ENCODE measurements at regions of chr15 and their contacts with region 1.

Region 1: DNA sequence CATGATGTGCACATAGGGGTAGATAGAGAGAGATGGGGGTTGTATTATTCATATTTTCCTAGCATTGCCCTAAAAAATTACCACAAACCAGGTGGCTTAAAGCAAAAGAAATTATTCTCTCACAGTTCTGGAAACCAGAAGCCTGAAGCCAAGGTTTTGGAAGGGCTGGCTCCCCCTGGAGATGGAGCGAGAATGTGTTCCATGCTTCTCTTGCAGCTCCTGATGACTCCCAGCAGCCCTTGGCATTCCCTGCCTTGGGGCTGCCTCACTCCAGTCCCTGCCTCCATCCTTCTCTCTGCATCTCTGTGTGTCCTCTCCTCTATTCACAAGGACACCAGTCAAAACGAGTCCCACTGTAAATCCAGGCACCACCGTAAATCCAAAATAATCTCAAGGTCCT is 91.5 kb upstream of the FAM174B start:
- DNase-seq: peak; percentile 28 to 50
- H3K4me3 ChIP-seq: no peak overlapping the region
- H3K4me3 Mint-ChIP-seq: no peak overlapping the region
- H3K27ac Mint-ChIP-seq: peak overlapping the region; percentile 90
- H3K4me1 ChIP-seq: peaks cover 80% of the 10 kb centered on the region
- H3K4me1 Mint-ChIP-seq: peaks cover 24% of the 10 kb centered on the region
- H3K27me3 ChIP-seq: no peaks in the 10 kb centered on the region
- H3K27me3 Mint-ChIP-seq: no peaks in the 10 kb centered on the region
- CTCF ChIP-seq: no peak

Region 2: GRCh38 chr15:92665100-92665555 is 81.9 kb before region 1 on chr15:
- CTCF ChIA-PET with region 1: no interaction called
- POLR2A ChIA-PET with region 1: no interaction called
- intact Hi-C with region 1: loop called (anchors 5 kb)
- DNase-seq: no peak
- H3K4me3 ChIP-seq: no peak overlapping the region
- H3K4me3 Mint-ChIP-seq: peak overlapping the region; percentile 25
- H3K27ac Mint-ChIP-seq: peak overlapping the region; percentile 44
- H3K4me1 ChIP-seq: peaks cover 80% of the 10 kb centered on the region
- H3K4me1 Mint-ChIP-seq: peaks cover 56% of the 10 kb centered on the region
- H3K27me3 ChIP-seq: no peaks in the 10 kb centered on the region
- H3K27me3 Mint-ChIP-seq: no peaks in the 10 kb centered on the region
- CTCF ChIP-seq: no peak

Region 3: DNA sequence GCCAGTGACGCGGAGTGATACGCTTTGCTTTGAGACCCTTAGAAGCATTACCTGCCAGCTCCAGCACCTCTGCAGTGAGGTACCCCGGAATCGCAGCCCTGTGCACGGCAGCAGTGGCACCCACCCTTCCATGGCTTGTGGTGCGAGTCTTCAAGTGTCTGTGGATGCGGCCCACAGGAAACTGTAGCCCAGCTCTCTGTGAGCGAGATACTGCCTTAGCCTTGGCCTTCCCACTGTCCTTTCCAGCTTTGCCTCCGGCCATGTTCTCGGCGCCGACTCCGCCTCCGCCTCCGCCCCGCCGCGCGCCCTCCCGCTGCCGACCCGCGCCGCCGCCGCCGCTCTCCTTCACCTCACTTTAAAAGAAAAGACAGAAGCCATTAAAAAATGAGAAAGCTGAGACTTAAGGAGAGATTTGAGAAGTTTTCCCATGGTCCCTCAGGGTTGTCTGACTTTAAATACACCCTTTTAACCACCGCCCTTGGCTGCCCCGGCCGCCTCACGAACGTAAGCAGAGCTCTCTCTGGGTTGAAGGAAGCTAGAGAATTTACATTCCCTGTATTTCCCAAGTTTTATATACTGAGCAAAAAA is 13.0 kb before region 1 on chr15:
- CTCF ChIA-PET with region 1: no interaction called
- POLR2A ChIA-PET with region 1: no interaction called
- intact Hi-C with region 1: loop called (anchors 1 kb)
- DNase-seq: peak; percentile 31 to 46
- H3K4me3 ChIP-seq: peak overlapping the region; percentile 33
- H3K4me3 Mint-ChIP-seq: peak overlapping the region; percentile 76
- H3K27ac Mint-ChIP-seq: peak overlapping the region; percentile 92
- H3K4me1 ChIP-seq: peaks cover 10% of the 10 kb centered on the region; the same call in 1 of the 2 replicates
- H3K4me1 Mint-ChIP-seq: peaks cover 6% of the 10 kb centered on the region
- H3K27me3 ChIP-seq: no peaks in the 10 kb centered on the region
- H3K27me3 Mint-ChIP-seq: no peaks in the 10 kb centered on the region
- CTCF ChIP-seq: no peak

Region 4: DNA sequence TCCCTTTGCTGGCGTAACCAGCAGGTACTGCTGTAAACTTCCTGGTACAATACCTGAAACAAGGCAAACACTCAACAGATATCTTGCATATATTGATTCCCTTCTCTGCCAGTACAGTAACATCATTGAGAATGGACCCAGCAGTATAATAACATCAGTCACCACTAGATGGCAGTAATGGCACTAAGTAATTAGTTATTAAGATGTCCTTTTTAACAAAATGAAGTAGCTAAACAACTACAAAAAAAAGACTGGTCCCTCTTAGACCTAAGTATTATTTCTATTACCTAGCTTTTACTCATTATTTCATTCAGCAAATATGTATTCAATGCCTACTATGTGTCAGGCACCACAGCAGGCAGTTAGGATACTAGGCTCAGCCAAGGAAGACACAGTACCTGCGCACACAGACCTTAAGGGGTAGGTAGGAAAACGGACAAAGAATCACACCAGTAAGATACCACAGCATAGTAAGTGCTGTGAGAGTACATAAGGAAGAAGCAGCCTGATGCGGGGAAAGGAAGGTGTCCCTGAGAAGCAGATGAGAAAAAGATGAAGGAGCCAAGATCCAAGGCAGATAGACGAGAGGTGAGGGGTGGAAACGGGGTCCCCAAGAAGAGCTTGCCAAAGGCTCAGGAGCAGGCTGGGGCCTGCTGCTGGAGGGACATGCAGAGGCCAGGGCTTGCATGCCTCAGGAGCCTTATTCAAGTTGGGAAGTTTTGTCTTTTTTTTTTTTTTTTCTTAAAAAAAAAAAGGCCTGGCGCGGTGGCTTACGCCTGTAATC is 50.3 kb after region 1 on chr15:
- CTCF ChIA-PET with region 1: no interaction called
- POLR2A ChIA-PET with region 1: interaction called, 6 read pairs
- intact Hi-C with region 1: loop called (anchors 1 kb)
- DNase-seq: peak in 1 of 2 experiments; percentile 77
- H3K4me3 ChIP-seq: no peak overlapping the region
- H3K4me3 Mint-ChIP-seq: peak overlapping the region; percentile 50
- H3K27ac Mint-ChIP-seq: peak overlapping the region; percentile 94
- H3K4me1 ChIP-seq: peaks cover 42% of the 10 kb centered on the region
- H3K4me1 Mint-ChIP-seq: peaks cover 17% of the 10 kb centered on the region
- H3K27me3 ChIP-seq: no peaks in the 10 kb centered on the region
- H3K27me3 Mint-ChIP-seq: no peaks in the 10 kb centered on the region
- CTCF ChIP-seq: peak; percentile 55 to 56

Region 5: DNA sequence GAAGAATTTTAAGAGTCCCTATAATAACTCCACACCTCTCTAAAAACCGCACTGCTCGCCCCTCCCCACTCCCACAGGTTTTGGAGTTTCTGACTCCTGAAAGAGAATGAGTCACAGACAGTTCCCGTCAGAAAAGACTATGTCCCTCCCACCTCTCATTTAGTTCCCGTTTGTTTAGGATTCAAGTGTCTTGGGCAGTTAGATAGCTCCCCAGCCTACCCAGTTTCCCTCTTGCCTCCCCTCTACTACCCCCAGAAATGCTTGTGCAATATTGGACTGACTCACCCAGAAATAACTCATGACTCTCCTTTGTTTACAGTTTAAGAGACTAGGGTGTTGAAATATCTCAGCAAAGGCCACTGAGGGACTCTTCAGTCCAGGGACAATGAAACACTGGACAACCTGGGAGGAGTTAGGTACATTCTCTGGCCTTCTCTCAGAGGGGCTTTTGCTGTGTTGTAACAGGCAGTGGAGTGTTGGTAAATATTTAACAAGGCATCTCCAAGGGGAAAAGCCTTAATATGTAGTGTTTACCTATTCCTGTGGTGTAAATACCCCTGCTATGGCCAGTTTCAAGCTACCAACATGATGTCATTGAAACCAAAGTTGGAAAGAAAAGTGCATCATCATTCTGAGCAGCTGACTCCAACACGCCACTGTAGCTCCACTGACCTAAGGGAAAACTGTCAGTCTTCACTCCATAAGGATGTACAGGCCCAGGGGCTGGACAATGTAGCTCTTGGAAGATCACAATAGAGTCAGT is 57.0 kb after region 1 on chr15:
- CTCF ChIA-PET with region 1: no interaction called
- POLR2A ChIA-PET with region 1: no interaction called
- intact Hi-C with region 1: loop called (anchors 1 kb)
- DNase-seq: peak; percentile 89 to 92
- H3K4me3 ChIP-seq: no peak overlapping the region
- H3K4me3 Mint-ChIP-seq: peak overlapping the region; percentile 6
- H3K27ac Mint-ChIP-seq: peak overlapping the region; percentile 83
- H3K4me1 ChIP-seq: peaks cover 41% of the 10 kb centered on the region
- H3K4me1 Mint-ChIP-seq: peaks cover 16% of the 10 kb centered on the region
- H3K27me3 ChIP-seq: no peaks in the 10 kb centered on the region
- H3K27me3 Mint-ChIP-seq: no peaks in the 10 kb centered on the region
- CTCF ChIP-seq: no peak

Region 6: DNA sequence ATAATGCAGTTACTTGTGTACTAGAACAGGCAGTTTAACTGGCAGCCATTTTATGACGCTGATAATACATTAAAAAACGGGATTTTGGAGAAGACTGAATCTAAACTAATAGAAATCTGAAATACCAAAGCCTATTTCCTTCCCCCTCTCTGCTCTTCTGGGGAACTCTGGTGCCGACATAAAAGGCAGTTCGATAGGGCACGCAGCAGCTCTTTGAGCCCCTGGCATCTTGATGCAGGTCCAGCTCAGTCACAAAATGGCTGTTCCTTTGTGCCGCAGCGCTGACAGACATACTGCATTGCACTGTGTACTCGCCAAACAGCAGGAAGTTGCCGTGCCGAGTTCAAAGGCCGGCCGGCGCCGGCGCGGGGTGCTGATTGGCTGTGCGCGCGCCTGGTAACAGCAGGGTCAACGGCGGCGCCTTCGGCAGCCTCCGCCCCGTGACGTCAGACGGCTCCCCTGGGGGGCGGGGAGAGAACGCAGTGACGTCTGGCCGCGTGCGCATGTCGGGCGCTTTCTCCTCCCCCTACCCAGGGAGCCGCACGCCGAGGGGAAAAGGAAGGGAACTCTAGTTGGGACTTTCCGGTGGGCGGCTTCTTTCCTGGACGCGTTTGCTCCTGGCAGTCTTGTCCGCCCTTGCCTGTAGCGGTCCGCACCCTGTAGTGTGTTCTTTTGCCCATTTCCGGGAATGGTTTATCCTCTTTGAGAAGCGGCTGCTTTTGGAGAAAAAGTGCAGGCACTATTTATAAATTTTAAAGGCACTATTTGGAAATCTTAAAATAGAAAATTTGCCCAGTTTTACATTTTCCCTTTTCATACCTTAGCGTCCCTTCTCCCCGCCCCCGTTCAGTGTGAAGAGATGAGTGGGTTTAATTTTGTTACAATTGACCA is 157.1 kb after region 1 on chr15:
- CTCF ChIA-PET with region 1: no interaction called
- POLR2A ChIA-PET with region 1: no interaction called
- intact Hi-C with region 1: loop called (anchors 5 kb)
- DNase-seq: peak; percentile 98 to 99
- H3K4me3 ChIP-seq: peak overlapping the region; percentile 51
- H3K4me3 Mint-ChIP-seq: peak overlapping the region; percentile 86
- H3K27ac Mint-ChIP-seq: peak overlapping the region; percentile 99
- H3K4me1 ChIP-seq: peaks cover 42% of the 10 kb centered on the region
- H3K4me1 Mint-ChIP-seq: peaks cover 45% of the 10 kb centered on the region
- H3K27me3 ChIP-seq: no peaks in the 10 kb centered on the region
- H3K27me3 Mint-ChIP-seq: no peaks in the 10 kb centered on the region
- CTCF ChIP-seq: no peak

Region 7: DNA sequence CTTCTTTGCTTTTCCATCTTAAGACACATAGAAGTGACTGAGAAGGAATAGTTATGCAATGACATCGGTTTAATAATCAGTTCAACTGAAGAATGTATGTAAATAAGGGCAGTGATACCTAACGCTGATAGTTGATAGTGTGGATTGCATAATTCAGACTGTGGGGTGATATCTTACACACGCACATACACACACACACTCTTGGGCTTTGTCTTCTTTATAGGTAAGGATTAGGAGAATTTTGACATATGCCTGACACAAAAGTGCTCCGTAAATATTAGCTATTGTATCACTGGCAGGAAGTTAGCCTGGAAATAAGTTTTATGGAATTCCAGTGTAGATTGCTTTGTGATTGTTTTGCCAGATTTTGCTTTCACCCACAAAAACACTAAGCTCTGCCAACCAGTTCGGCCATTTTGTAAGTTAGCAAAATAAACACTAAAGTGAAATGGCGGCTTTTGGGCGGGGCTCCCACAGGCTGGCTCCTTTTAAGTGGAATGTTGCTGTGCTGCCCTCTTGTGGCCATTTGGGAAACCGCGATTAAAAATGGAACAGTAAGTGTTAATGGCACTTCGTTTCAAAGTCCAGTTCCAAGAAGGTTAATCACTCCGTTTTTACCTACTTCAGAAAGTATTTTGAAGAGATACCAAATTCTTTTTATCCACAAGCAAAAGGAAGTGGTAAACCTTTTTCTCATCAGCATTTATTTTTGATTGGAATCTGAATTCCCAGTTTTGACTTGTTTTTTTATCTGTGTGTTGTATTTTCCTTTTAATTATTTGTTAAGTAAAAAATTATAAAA is 170.8 kb after region 1 on chr15:
- CTCF ChIA-PET with region 1: no interaction called
- POLR2A ChIA-PET with region 1: no interaction called
- intact Hi-C with region 1: loop called (anchors 1 kb)
- DNase-seq: peak; percentile 92
- H3K4me3 ChIP-seq: peak overlapping the region; percentile 10; the same call in 1 of the 2 replicates
- H3K4me3 Mint-ChIP-seq: peak overlapping the region; percentile 78
- H3K27ac Mint-ChIP-seq: peak overlapping the region; percentile 88
- H3K4me1 ChIP-seq: peaks cover 72% of the 10 kb centered on the region
- H3K4me1 Mint-ChIP-seq: peaks cover 46% of the 10 kb centered on the region
- H3K27me3 ChIP-seq: no peaks in the 10 kb centered on the region
- H3K27me3 Mint-ChIP-seq: no peaks in the 10 kb centered on the region
- CTCF ChIP-seq: peak; percentile 64 to 78

Region 8: DNA sequence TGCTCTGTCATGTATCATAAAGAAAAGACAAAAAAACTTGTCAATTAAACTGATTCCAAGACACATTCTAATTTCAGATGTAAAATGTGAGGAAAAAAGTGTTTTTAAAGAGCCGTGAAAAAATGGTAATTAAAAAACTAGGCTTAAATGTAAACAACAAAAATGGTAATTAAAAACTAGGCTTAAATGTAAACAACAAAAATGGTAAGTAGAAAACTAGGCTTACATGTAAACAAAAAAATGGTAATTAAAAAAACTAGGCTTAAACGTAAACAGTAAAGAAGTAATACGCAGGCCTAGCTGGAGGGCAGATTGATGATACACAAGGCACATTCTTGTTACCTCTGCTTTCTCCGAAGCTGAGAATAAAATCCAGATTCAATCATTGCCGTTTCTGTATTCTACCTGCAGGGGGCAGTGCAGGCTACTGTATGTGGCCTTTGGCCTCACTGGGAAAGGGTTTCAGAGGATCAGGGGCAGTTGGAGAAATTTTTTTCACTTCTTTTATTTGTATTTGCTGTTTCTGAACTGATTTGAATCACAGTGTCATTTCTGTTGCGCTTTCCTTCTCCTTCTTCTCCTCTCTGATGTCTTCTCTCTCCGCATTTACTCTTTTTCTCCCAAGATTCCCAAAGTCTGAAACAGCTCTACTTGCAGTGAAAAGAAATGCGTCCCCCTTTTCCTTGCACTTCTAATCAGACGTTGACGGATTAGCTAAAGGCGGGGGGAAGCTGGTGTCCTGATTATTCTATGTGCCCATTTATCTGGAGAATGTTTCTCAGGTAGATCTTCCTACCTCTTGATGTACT is 1417.2 kb after region 1 on chr15:
- CTCF ChIA-PET with region 1: no interaction called
- POLR2A ChIA-PET with region 1: no interaction called
- intact Hi-C with region 1: no loop called
- DNase-seq: peak; percentile 53 to 80
- H3K4me3 ChIP-seq: no peak overlapping the region
- H3K4me3 Mint-ChIP-seq: no peak overlapping the region
- H3K27ac Mint-ChIP-seq: no peak overlapping the region
- H3K4me1 ChIP-seq: no peaks in the 10 kb centered on the region
- H3K4me1 Mint-ChIP-seq: no peaks in the 10 kb centered on the region
- H3K27me3 ChIP-seq: no peaks in the 10 kb centered on the region
- H3K27me3 Mint-ChIP-seq: peaks cover 2% of the 10 kb centered on the region
- CTCF ChIP-seq: peak; percentile 81 to 88

Measured in Caco-2 (cell line).